ENCODE measurements at regions of chr2 and their contacts with region 1.

Region 1: DNA sequence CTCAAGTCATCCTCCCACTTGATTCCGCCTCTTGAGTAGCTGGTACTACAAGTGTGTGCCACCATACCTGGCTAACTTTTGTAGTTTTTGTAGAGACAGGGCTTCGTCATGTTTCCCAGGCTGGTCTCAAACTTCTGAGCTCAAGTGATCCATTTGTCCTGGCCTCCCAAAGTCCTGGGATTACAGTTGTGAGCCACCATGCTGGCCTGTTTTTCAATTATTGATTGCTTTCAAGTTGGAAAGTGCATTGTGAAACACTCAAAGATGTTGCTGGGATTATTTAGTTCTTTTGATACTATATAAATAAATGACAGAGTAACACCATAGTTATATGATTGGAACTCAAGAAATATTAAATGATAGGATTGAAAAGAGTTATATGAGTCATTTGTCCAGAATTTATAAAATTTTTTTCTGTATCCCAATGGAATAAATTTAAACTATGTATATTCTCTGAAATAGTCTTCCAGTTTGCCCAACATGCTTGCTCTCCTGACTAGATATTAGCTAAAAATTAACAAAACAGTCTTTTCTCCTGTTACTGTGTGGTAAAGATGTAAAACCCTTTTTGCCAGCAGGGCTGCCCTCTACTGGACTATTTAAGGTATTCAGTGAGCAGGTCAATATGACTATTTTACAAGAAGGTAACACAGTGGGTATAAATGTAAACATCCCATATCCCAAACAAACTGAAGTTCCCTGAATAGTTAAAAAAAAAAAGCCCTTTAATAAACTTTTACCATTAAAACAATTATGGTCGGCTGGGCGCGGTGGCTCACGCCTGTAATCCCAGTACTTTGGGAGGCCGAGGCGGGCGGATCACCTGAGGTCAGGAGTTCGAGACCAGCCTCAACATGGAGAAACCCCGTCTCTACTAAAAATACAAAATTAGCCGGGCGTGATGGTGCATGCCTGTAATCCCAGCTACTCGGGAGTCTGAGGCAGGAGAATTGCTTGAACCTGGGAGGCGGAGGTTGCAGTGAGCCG is 42.7 kb downstream of the ACSL3 start:
- DNase-seq: peak; percentile 59
- ATAC-seq: no peak
- H3K4me3 ChIP-seq: no peak overlapping the region
- H3K4me3 Mint-ChIP-seq: no peak overlapping the region
- H3K27ac ChIP-seq: no peak overlapping the region
- H3K27ac Mint-ChIP-seq: no peak overlapping the region
- H3K4me1 ChIP-seq: no peaks in the 10 kb centered on the region
- H3K4me1 Mint-ChIP-seq: peaks cover 10% of the 10 kb centered on the region
- H3K27me3 ChIP-seq: no peaks in the 10 kb centered on the region
- H3K27me3 Mint-ChIP-seq: no peaks in the 10 kb centered on the region
- CTCF ChIP-seq: peak; percentile 89

Region 2: GRCh38 chr2:222057347-222058073 is 846.0 kb before region 1 on chr2:
- CTCF ChIA-PET with region 1: no interaction called
- POLR2A ChIA-PET with region 1: no interaction called
- intact Hi-C with region 1: loop called (anchors 10 kb)
- DNase-seq: peak; percentile 4
- ATAC-seq: no peak
- H3K4me3 ChIP-seq: no peak overlapping the region
- H3K4me3 Mint-ChIP-seq: no peak overlapping the region
- H3K27ac ChIP-seq: no peak overlapping the region
- H3K27ac Mint-ChIP-seq: no peak overlapping the region
- H3K4me1 ChIP-seq: no peaks in the 10 kb centered on the region
- H3K4me1 Mint-ChIP-seq: no peaks in the 10 kb centered on the region
- H3K27me3 ChIP-seq: no peaks in the 10 kb centered on the region
- H3K27me3 Mint-ChIP-seq: peaks cover 41% of the 10 kb centered on the region
- CTCF ChIP-seq: peak; percentile 75

Region 3: GRCh38 chr2:222690564-222691200 is 212.8 kb before region 1 on chr2:
- CTCF ChIA-PET with region 1: interaction called, 9 read pairs
- POLR2A ChIA-PET with region 1: no interaction called
- intact Hi-C with region 1: loop called (anchors 1 kb)
- DNase-seq: peak; percentile 86
- ATAC-seq: peak; percentile 100
- H3K4me3 ChIP-seq: no peak overlapping the region
- H3K4me3 Mint-ChIP-seq: no peak overlapping the region
- H3K27ac ChIP-seq: no peak overlapping the region
- H3K27ac Mint-ChIP-seq: no peak overlapping the region
- H3K4me1 ChIP-seq: peaks cover 4 to 6% of the 10 kb centered on the region in 2 donors
- H3K4me1 Mint-ChIP-seq: peaks cover 5% of the 10 kb centered on the region
- H3K27me3 ChIP-seq: no peaks in the 10 kb centered on the region
- H3K27me3 Mint-ChIP-seq: peaks cover 16% of the 10 kb centered on the region
- CTCF ChIP-seq: peak; percentile 100

Region 4: GRCh38 chr2:222797261-222797660 is 106.3 kb before region 1 on chr2:
- CTCF ChIA-PET with region 1: interaction called, 11 read pairs
- POLR2A ChIA-PET with region 1: no interaction called
- intact Hi-C with region 1: loop called (anchors 1 kb)
- DNase-seq: peak; percentile 13
- ATAC-seq: no peak
- H3K4me3 ChIP-seq: no peak overlapping the region
- H3K4me3 Mint-ChIP-seq: no peak overlapping the region
- H3K27ac ChIP-seq: no peak overlapping the region
- H3K27ac Mint-ChIP-seq: no peak overlapping the region
- H3K4me1 ChIP-seq: no peaks in the 10 kb centered on the region
- H3K4me1 Mint-ChIP-seq: no peaks in the 10 kb centered on the region
- H3K27me3 ChIP-seq: no peaks in the 10 kb centered on the region
- H3K27me3 Mint-ChIP-seq: peaks cover 6% of the 10 kb centered on the region
- CTCF ChIP-seq: peak; percentile 48

Region 5: GRCh38 chr2:223314811-223315210 is 411.3 kb after region 1 on chr2:
- CTCF ChIA-PET with region 1: no interaction called
- POLR2A ChIA-PET with region 1: no interaction called
- intact Hi-C with region 1: no loop called
- DNase-seq: no peak
- ATAC-seq: no peak
- H3K4me3 ChIP-seq: no peak overlapping the region
- H3K4me3 Mint-ChIP-seq: no peak overlapping the region
- H3K27ac ChIP-seq: no peak overlapping the region
- H3K27ac Mint-ChIP-seq: no peak overlapping the region
- H3K4me1 ChIP-seq: no peaks in the 10 kb centered on the region
- H3K4me1 Mint-ChIP-seq: no peaks in the 10 kb centered on the region
- H3K27me3 ChIP-seq: no peaks in the 10 kb centered on the region
- H3K27me3 Mint-ChIP-seq: no peaks in the 10 kb centered on the region
- CTCF ChIP-seq: no peak

Measured in B cell (primary cell).